Calu3 (cell line): ENCODE measurements at regions of chr13 and their contacts with region 1.

Region 1: GRCh38 chr13:99656092-99656745 is 154.9 kb downstream of the TM9SF2 start:
- DNase-seq: peak; percentile 65
- H3K4me3 Mint-ChIP-seq: peak overlapping the region; percentile 52
- H3K27ac Mint-ChIP-seq: peak overlapping the region; percentile 75
- H3K4me1 Mint-ChIP-seq: no peaks in the 10 kb centered on the region
- H3K27me3 Mint-ChIP-seq: no peaks in the 10 kb centered on the region
- CTCF ChIP-seq: peak; percentile 39

Region 2: DNA sequence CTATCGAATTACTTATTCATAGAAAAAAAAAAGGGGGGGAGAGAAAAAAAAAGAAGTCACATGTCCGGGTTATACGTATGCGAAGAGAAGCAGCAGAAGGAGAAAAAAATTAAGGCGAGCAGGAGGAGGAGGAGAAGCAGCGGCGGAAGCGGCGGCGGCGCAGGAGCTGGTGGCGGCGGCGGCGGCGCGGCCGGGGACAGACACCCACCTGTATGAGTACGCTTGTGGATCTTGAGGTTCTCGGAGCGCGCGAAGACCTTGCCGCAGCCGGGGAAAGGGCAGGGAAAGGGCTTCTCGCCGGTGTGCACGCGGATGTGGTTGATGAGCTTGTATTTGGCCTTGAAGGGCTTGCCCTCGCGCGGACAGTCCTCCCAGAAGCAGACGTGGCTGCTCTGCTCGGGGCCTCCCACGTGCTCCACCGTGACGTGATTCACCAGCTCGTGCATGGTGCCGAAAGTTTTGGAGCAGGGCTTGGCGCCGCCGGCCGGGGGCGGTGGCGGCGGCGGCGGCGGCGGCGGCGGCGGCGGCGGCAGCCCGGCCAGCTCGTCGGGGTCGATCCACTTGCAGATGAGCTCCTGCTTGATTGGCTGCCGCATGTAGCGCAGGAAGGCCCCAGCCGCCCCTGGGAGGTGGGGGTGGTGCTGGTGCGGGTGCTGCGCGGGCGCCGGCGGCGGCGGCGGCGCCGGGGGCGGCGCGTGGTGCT is 313.9 kb after region 1 on chr13:
- CTCF ChIA-PET with region 1: no interaction called
- intact Hi-C with region 1: loop called (anchors 10 kb)
- DNase-seq: peak; percentile 45
- H3K4me3 Mint-ChIP-seq: peak overlapping the region; percentile 80
- H3K27ac Mint-ChIP-seq: peak overlapping the region; percentile 75
- H3K4me1 Mint-ChIP-seq: no peaks in the 10 kb centered on the region
- H3K27me3 Mint-ChIP-seq: no peaks in the 10 kb centered on the region
- CTCF ChIP-seq: no peak

Region 3: GRCh38 chr13:100235311-100235901 is 579.2 kb after region 1 on chr13:
- CTCF ChIA-PET with region 1: interaction called, 7 read pairs
- intact Hi-C with region 1: loop called (anchors 5 kb)
- DNase-seq: peak; percentile 15
- H3K4me3 Mint-ChIP-seq: no peak overlapping the region
- H3K27ac Mint-ChIP-seq: no peak overlapping the region
- H3K4me1 Mint-ChIP-seq: no peaks in the 10 kb centered on the region
- H3K27me3 Mint-ChIP-seq: no peaks in the 10 kb centered on the region
- CTCF ChIP-seq: no peak